IMR-90 (cell line): ENCODE measurements at regions of chr17 and their contacts with region 1.

Region 1: DNA sequence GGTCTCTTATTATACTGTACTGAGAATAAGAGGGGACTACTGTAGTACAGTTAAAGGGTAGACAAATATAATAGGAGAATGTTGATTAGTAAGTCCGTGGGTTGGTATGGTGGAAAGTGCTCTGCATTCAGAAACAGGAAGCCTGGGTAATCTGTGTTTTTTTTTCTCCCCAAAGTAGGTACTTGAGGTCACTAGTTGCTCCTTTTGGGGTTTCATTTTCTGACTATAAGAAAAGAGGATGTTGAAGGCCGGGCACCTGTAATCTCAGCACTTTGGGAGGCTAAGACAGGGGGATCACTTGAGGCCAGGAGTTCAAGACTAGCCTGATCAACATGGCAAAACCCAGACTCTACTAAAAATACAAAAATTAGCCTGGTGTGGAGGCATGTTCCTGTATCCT is 42.0 kb upstream of the MMD start:
- DNase-seq: no peak
- ATAC-seq: no peak
- H3K4me3 ChIP-seq: no peak overlapping the region
- H3K27ac ChIP-seq: no peak overlapping the region
- H3K4me1 ChIP-seq: peaks cover 6% of the 10 kb centered on the region
- H3K27me3 ChIP-seq: no peaks in the 10 kb centered on the region
- CTCF ChIP-seq: no peak
- POLR2A ChIP-seq: no peak
- RAD21 ChIP-seq: no peak

Region 2: GRCh38 chr17:55496094-55496881 is 32.7 kb after region 1 on chr17:
- CTCF ChIA-PET with region 1: no interaction called
- POLR2A ChIA-PET with region 1: no interaction called
- dilution Hi-C with region 1: no loop called
- in situ Hi-C with region 1: no loop called
- intact Hi-C with region 1: loop called (anchors 5 kb)
- DNase-seq: peak; percentile 67
- ATAC-seq: peak; percentile 67
- H3K4me3 ChIP-seq: no peak overlapping the region
- H3K27ac ChIP-seq: peak overlapping the region; percentile 57; the same call in 1 of the 2 replicates
- H3K4me1 ChIP-seq: peaks cover 2% of the 10 kb centered on the region; the same call in 1 of the 2 replicates
- H3K27me3 ChIP-seq: peaks cover 2% of the 10 kb centered on the region; the same call in 1 of the 2 replicates
- CTCF ChIP-seq: no peak
- POLR2A ChIP-seq: no peak
- RAD21 ChIP-seq: no peak